GM10248 (cell line): ENCODE measurements at regions of chr14 and their contacts with region 1.

Region 1: GRCh38 chr14:72104011-72104613 is 171.9 kb downstream of the RGS6 start:
- DNase-seq: peak; percentile 39
- CTCF ChIP-seq: peak; percentile 44

Region 2: GRCh38 chr14:71764701-71765382 is 339.3 kb before region 1 on chr14:
- CTCF ChIA-PET with region 1: no interaction called
- POLR2A ChIA-PET with region 1: no interaction called
- DNase-seq: no peak
- CTCF ChIP-seq: no peak

Region 3: GRCh38 chr14:72084935-72085334 is 19.2 kb before region 1 on chr14:
- CTCF ChIA-PET with region 1: interaction called, 27 read pairs
- POLR2A ChIA-PET with region 1: no interaction called
- DNase-seq: no peak
- CTCF ChIP-seq: no peak

Region 4: GRCh38 chr14:72366619-72367018 is 262.5 kb after region 1 on chr14:
- CTCF ChIA-PET with region 1: no interaction called
- POLR2A ChIA-PET with region 1: no interaction called
- DNase-seq: no peak
- CTCF ChIP-seq: no peak